Right ventricle myocardium inferior (tissue), 1 donor: ENCODE measurements at regions of chr9 and their contacts with region 1.

Region 1: DNA sequence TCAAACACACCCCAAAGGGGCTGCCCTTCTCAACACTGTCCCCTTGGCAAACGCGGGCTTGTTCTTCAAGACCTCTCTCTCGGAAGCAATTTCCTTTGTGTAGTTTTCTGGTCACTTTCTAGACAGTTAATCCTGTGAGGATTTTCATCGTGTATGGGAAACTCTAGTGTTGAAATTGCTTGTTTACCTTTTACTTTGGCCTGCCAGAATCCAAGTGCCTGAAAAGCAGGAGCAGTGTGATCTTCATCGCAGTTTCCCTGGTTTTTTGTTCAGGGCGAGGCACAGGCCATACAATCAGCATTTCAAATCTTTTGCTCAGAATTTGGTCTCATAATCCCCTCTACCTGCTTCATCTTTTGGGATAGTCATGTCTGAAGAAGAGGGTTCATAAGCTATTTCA is 115.7 kb upstream of the C9orf72 start:
- DNase-seq: no peak
- ATAC-seq: no peak

Region 2: GRCh38 chr9:27468462-27469110 is 220.4 kb before region 1 on chr9:
- intact Hi-C with region 1: no loop called
- DNase-seq: no peak
- ATAC-seq: no peak

Region 3: DNA sequence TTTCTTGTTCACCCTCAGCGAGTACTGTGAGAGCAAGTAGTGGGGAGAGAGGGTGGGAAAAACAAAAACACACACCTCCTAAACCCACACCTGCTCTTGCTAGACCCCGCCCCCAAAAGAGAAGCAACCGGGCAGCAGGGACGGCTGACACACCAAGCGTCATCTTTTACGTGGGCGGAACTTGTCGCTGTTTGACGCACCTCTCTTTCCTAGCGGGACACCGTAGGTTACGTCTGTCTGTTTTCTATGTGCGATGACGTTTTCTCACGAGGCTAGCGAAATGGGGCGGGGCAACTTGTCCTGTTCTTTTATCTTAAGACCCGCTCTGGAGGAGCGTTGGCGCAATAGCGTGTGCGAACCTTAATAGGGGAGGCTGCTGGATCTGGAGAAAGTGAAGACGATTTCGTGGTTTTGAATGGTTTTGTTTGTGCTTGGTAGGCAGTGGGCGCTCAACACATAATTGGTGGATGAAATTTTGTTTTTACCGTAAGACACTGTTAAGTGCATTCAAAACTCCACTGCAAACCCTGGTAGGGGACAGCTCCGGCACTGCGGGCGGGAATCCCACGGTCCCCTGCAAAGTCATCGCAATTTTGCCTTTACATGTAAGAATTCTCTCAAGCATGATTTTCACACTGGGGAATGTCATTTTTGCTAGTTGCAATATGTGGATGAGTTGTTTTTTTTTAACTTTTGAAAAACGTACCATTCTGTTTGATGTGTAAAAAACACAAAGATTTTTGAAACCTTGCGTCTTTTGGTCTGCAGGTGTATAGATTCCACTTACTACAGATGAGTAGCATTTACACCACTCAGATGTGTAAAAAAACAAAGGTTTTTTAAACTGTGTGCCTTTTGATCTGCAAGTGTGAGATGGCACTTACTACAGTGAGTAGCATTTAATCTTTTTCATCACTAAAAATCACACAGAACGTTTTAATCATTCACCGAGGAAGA is 115.0 kb before region 1 on chr9:
- intact Hi-C with region 1: loop called (anchors 10 kb)
- DNase-seq: peak; percentile 97
- ATAC-seq: peak; percentile 94